Activated CD4-positive, alpha-beta T cell treated with anti-CD3 and anti-CD28 coated beads, Interleukin-2, amount 10 ng/mL, durations not matched to agents 24 days and 14 days (primary cell): ENCODE measurements at regions of chr1 and their contacts with region 1.

Region 1: DNA sequence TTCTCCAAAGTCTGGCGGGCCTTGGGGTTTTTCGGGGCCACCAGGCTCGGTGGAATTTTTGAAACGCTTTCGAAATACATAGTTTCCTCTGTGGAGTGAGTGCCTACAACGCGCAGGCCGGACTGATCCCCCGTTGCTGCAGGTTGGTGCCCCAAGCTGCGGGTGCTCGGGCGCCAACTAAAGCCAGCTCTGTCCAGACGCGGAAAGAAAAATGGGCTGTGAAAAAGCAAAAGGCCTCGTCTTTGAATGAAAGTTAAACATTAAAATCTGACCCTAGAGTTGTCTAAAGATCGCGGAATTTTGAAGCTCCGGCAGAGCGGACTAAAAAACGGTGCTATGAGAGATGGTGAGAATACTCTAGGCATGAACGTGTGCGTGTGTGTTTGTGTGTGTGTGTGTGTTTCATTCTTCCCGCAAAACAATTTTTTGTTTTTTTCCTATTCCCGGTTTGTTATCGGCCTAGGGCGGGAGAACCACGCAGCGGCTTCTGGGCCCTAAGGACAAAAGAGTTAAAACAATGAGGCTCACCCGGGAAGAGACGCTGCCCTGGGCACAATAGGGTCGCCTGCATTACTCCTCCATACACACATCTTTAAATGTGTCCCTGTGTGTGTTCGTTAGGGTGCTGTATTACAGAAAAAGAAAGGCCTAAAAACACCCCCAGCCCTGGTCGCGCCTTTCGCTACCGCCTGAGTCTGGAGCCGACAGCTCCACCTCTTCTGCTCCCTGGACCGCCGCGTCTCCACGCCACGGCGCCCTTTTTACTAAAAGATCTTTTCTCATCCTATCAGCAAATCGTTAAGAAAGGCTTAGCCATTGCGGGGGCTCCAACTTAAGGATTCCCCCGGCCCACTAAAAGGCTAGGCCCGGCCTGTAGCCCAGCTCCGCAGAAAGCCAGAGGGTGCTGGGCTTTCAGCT is 3.2 kb downstream of the TBX15 start:
- DNase-seq: peak; percentile 60
- H3K4me3 Mint-ChIP-seq: peak overlapping the region; percentile 15
- H3K27ac Mint-ChIP-seq: peak overlapping the region; percentile 82
- H3K4me1 Mint-ChIP-seq: peaks cover 7% of the 10 kb centered on the region
- H3K27me3 Mint-ChIP-seq: peaks cover 89% of the 10 kb centered on the region

Region 2: GRCh38 chr1:118429856-118430255 is 555.1 kb before region 1 on chr1:
- intact Hi-C with region 1: no loop called
- DNase-seq: no peak
- H3K4me3 Mint-ChIP-seq: no peak overlapping the region
- H3K27ac Mint-ChIP-seq: no peak overlapping the region
- H3K4me1 Mint-ChIP-seq: no peaks in the 10 kb centered on the region
- H3K27me3 Mint-ChIP-seq: no peaks in the 10 kb centered on the region

Region 3: DNA sequence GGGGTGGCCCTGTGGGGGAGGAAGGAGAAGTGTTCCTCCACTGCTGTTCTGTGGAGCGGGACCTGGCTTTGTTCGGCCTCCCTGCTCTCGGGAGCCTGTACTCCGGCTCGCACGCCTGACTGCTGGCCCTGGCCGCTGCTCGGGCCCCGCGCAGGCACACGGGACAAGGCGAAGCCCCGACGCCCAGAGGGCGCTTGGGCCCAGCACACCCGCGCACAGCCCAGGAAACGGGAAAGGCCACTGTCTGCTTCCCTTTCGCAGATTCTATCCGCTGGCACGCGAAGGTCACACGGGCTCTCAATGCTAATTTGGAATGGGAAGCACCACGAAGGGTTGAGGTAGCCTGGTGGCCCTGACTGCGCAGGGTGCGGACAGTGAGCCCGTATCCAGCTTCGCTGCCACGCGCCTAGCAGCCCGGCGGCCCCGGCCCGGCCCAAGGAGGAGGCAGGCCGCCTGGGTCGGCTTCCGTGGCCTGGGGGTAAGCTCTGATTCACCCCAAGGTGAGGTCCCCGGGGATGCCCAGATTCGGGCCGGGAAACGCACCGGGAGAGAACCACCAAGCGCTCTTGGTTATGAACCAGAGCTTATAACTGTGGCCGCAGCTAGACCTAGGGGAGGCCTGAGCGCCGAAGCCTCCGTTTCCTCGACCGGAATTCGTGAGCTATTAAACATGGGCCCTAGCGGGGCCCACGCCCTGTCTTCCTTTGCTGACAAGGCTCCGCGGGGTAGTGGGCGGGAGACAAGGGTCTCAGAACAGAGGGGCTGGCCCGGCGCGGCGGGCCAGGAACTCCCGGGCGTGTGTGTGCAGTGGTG is 22.9 kb after region 1 on chr1:
- intact Hi-C with region 1: loop called (anchors 1 kb)
- DNase-seq: no peak
- H3K4me3 Mint-ChIP-seq: no peak overlapping the region
- H3K27ac Mint-ChIP-seq: no peak overlapping the region
- H3K4me1 Mint-ChIP-seq: peaks cover 5% of the 10 kb centered on the region
- H3K27me3 Mint-ChIP-seq: peaks cover 70% of the 10 kb centered on the region